Endothelial cell of umbilical vein (primary cell): ENCODE measurements at regions of chr13 and their contacts with region 1.

Region 1: DNA sequence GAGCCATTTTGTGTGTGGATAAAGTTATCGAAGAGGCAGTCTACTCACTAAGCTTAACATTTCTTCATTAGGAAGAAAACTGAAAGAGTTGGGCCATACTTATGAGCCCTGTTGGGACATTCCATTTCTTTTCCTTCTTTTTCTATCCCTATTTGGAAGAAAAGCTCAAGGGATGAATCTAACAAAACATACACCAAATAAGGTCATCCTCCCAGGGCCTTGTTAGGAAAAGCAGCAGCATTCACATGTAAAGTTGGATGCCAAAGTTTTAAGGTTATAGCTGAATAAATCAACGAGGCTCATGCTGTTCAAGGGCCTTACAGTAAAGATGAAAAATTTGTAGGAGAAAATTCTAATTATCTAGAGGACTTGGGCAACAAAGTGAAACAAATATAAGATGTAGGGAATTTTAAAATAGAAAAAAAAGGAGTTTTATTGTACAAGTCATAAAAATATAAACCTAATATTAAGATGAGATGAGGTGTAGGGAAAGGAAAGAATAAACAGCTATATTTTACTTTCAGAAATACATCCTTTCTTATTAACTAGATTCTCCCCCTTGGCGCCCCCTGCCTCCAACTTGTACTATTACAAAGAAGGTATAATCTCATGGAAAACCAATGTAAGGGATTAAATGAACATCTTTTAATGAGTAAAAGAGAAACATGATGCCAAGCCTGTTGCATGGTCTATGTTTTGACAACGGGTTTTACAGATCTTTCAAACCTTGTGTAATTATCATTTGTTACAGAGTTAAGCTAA is 160.4 kb downstream of the PCDH20 start:
- DNase-seq: peak; percentile 6
- H3K4me3 ChIP-seq: no peak overlapping the region
- H3K27ac ChIP-seq: no peak overlapping the region
- H3K4me1 ChIP-seq: no peaks in the 10 kb centered on the region
- H3K27me3 ChIP-seq: no peaks in the 10 kb centered on the region
- CTCF ChIP-seq: peak in 1 of 2 donors; percentile 11
- POLR2A ChIP-seq: no peak

Region 2: DNA sequence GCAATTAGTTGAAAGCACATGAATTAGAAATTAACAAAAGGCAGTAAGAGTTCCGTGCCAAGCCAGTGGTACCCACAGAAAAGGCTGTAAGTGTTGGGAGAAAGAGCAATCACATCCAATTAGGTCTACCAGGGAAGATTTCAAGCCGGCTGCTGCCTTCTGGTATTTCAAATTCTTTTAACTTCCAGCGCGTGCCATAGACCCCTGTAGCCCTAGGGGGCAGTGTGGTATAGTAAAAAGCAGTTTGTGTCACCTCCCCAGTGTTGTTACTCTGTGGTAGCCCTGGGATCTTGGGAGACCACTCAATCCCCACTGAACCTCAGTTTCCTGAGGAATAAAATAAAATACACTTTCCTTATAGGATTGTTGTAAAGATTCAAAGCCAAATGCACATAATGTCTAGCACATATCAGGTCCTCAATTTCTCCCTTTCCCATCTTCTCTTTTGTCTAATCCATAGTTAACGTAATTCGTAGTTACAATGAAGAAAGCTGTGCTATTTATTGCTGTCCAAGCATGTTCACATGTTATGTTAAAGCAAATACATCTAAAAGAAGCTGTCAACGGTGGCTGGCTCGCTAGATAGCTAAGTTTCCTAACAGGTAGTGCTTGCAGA is 628.0 kb before region 1 on chr13:
- CTCF ChIA-PET with region 1: no interaction called
- POLR2A ChIA-PET with region 1: no interaction called
- dilution Hi-C with region 1: no loop called
- intact Hi-C with region 1: loop called (anchors 1 kb)
- DNase-seq: peak; percentile 42
- H3K4me3 ChIP-seq: no peak overlapping the region
- H3K27ac ChIP-seq: no peak overlapping the region
- H3K4me1 ChIP-seq: no peaks in the 10 kb centered on the region
- H3K27me3 ChIP-seq: peaks cover 2 to 22% of the 10 kb centered on the region in 2 experiments
- CTCF ChIP-seq: peak; percentile 63 to 72
- POLR2A ChIP-seq: no peak